CD4-positive, alpha-beta T cell (primary cell): ENCODE measurements at regions of chr7 and their contacts with region 1.

Region 1: DNA sequence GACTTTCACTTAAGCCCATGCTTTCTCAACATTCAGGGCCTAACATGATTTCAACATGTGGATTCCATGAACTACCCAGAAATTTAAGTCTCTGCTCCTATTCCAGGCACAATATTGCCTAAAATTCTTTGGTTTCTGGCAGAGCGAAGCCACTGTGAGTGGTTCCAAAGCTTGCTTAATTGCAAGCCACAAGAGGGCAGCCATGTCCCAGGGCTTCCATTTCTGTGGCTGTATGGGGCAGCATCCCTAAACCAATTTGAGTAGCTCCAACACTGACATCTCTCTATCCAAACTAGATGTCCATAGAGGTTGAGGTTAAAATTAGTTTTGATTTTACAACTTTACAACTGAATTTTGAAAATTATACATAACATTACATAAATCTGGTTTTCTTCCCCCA is 56.3 kb upstream of the MDFIC start:
- DNase-seq: peak; percentile 35 to 78 (median 46)
- ATAC-seq: peak; percentile 66
- H3K4me3 ChIP-seq: no peak overlapping the region
- H3K4me3 Mint-ChIP-seq: no peak overlapping the region
- H3K27ac ChIP-seq: no peak overlapping the region
- H3K27ac Mint-ChIP-seq: no peak overlapping the region
- H3K4me1 ChIP-seq: no peaks in the 10 kb centered on the region
- H3K4me1 Mint-ChIP-seq: no peaks in the 10 kb centered on the region
- H3K27me3 ChIP-seq: no peaks in the 10 kb centered on the region
- H3K27me3 Mint-ChIP-seq: no peaks in the 10 kb centered on the region
- CTCF ChIP-seq: peak; percentile 89

Region 2: DNA sequence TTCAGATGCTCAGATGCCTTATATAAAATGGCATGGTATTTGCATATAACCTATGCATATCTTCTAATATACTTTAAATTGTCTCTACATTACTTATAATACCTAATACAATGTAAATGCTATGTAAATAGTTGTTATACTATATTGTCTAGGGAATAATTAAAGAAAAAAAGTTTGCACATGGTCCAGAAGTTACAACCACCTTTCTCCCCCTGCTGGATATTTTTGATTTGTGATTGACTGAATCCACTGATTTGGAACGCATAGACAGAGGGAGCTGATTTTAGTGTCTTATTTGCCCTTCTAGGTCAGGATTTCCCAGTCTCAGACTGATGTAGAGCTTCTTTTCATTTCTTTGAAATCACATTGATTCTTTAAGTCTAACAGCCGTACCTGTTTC is 88.2 kb after region 1 on chr7:
- CTCF ChIA-PET with region 1: interaction called, 6 read pairs
- POLR2A ChIA-PET with region 1: no interaction called
- intact Hi-C with region 1: loop called (anchors 5 kb)
- DNase-seq: peak in 1 of 14 experiments; percentile 17
- ATAC-seq: no peak
- H3K4me3 ChIP-seq: no peak overlapping the region
- H3K4me3 Mint-ChIP-seq: no peak overlapping the region
- H3K27ac ChIP-seq: no peak overlapping the region
- H3K27ac Mint-ChIP-seq: no peak overlapping the region
- H3K4me1 ChIP-seq: peaks cover 16% of the 10 kb centered on the region
- H3K4me1 Mint-ChIP-seq: peaks cover 68% of the 10 kb centered on the region
- H3K27me3 ChIP-seq: no peaks in the 10 kb centered on the region
- H3K27me3 Mint-ChIP-seq: no peaks in the 10 kb centered on the region
- CTCF ChIP-seq: peak; percentile 22

Region 3: DNA sequence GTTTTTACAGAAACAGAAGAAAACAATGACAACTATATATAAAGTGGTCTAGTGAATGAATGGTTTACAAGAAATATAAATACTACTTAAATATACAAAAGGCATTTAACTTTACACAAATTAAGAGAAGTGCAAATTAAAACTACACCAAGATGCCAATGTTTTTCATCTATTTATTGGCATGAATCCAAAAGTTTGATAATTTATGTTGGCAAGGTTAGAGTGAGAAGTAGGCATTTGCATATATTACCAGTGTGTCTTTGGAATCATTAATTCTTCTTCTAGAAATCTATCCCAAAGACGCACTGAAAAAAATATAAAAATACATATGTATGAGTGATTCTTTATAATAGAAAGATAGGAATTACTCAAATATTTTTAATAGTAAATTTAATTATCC is 513.8 kb after region 1 on chr7:
- CTCF ChIA-PET with region 1: no interaction called
- POLR2A ChIA-PET with region 1: no interaction called
- intact Hi-C with region 1: loop called in 1 of 2 experiments (anchors 10 kb)
- DNase-seq: no peak
- ATAC-seq: no peak
- H3K4me3 ChIP-seq: no peak overlapping the region
- H3K4me3 Mint-ChIP-seq: no peak overlapping the region
- H3K27ac ChIP-seq: no peak overlapping the region
- H3K27ac Mint-ChIP-seq: no peak overlapping the region
- H3K4me1 ChIP-seq: no peaks in the 10 kb centered on the region
- H3K4me1 Mint-ChIP-seq: no peaks in the 10 kb centered on the region
- H3K27me3 ChIP-seq: no peaks in the 10 kb centered on the region
- H3K27me3 Mint-ChIP-seq: peaks cover 4% of the 10 kb centered on the region
- CTCF ChIP-seq: no peak

Region 4: GRCh38 chr7:115679976-115680375 is 814.4 kb after region 1 on chr7:
- CTCF ChIA-PET with region 1: interaction called, 4 read pairs
- POLR2A ChIA-PET with region 1: no interaction called
- intact Hi-C with region 1: loop called in 1 of 2 experiments (anchors 10 kb)
- DNase-seq: peak in 3 of 14 experiments; percentile 23 to 32 (median 30)
- ATAC-seq: no peak
- H3K4me3 ChIP-seq: no peak overlapping the region
- H3K4me3 Mint-ChIP-seq: no peak overlapping the region
- H3K27ac ChIP-seq: no peak overlapping the region
- H3K27ac Mint-ChIP-seq: no peak overlapping the region
- H3K4me1 ChIP-seq: no peaks in the 10 kb centered on the region
- H3K4me1 Mint-ChIP-seq: no peaks in the 10 kb centered on the region
- H3K27me3 ChIP-seq: no peaks in the 10 kb centered on the region
- H3K27me3 Mint-ChIP-seq: no peaks in the 10 kb centered on the region
- CTCF ChIP-seq: no peak

Region 5: GRCh38 chr7:115910541-115911164 is 1045.1 kb after region 1 on chr7:
- CTCF ChIA-PET with region 1: no interaction called
- POLR2A ChIA-PET with region 1: no interaction called
- intact Hi-C with region 1: loop called in 1 of 2 experiments (anchors 5 kb)
- DNase-seq: peak in 3 of 14 experiments; percentile 22 to 24 (median 23)
- ATAC-seq: no peak
- H3K4me3 ChIP-seq: no peak overlapping the region
- H3K4me3 Mint-ChIP-seq: no peak overlapping the region
- H3K27ac ChIP-seq: no peak overlapping the region
- H3K27ac Mint-ChIP-seq: no peak overlapping the region
- H3K4me1 ChIP-seq: no peaks in the 10 kb centered on the region
- H3K4me1 Mint-ChIP-seq: no peaks in the 10 kb centered on the region
- H3K27me3 ChIP-seq: no peaks in the 10 kb centered on the region
- H3K27me3 Mint-ChIP-seq: peaks cover 6% of the 10 kb centered on the region
- CTCF ChIP-seq: peak; percentile 16